GM12878 (cell line): ENCODE measurements at regions of chr3 and their contacts with region 1.

Region 1: GRCh38 chr3:42190701-42191462 is 75.1 kb downstream of the CCK start:
- DNase-seq: no peak
- ATAC-seq: peak; percentile 47
- H3K4me3 ChIP-seq: no peak overlapping the region
- H3K27ac ChIP-seq: peak overlapping the region; percentile 81; the same call in 1 of the 2 replicates
- H3K4me1 ChIP-seq: peaks cover 50% of the 10 kb centered on the region
- H3K27me3 ChIP-seq: no peaks in the 10 kb centered on the region
- CTCF ChIP-seq: peak; percentile 75 to 91 (median 79)
- EP300 ChIP-seq: no peak
- POLR2A ChIP-seq: peak; percentile 21; the same call in 1 of the 2 replicates
- RAD21 ChIP-seq: peak; percentile 79

Region 2: DNA sequence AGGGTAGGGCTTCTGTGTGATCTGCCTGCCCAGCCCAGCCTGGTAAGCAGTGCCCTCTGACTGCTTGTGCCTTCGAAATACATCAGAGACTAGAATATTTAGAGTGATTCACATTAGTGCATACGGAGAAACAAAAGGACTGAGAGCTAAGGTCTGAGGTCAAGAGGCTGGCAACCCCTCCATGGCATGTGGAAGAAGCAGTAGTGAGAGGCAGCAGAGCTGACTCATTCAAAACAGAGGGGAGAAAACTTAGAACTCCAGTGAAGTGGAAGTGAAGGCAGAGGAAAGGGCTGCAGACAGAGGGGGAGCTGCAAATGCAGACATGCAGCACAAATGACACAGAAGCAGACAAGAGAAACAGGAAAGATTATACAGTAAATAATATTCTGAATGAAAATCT is 290.6 kb before region 1 on chr3:
- CTCF ChIA-PET with region 1: interaction called, 19 read pairs
- POLR2A ChIA-PET with region 1: no interaction called
- RAD21 ChIA-PET with region 1: interaction called, 5 read pairs
- SMC1A ChIA-PET with region 1: interaction called, 13 read pairs
- in situ Hi-C with region 1: no loop called
- intact Hi-C with region 1: loop called (anchors 10 kb)
- DNase-seq: no peak
- ATAC-seq: no peak
- H3K4me3 ChIP-seq: no peak overlapping the region
- H3K27ac ChIP-seq: no peak overlapping the region
- H3K4me1 ChIP-seq: no peaks in the 10 kb centered on the region
- H3K27me3 ChIP-seq: no peaks in the 10 kb centered on the region
- CTCF ChIP-seq: no peak
- EP300 ChIP-seq: no peak
- POLR2A ChIP-seq: no peak
- RAD21 ChIP-seq: no peak

Region 3: GRCh38 chr3:42081838-42082473 is 108.9 kb before region 1 on chr3:
- CTCF ChIA-PET with region 1: interaction called, 10 read pairs
- POLR2A ChIA-PET with region 1: no interaction called
- RAD21 ChIA-PET with region 1: interaction called, 3 read pairs
- SMC1A ChIA-PET with region 1: no interaction called
- in situ Hi-C with region 1: no loop called
- intact Hi-C with region 1: no loop called
- DNase-seq: no peak
- ATAC-seq: peak; percentile 68
- H3K4me3 ChIP-seq: peak overlapping the region; percentile 17; the same call in 1 of the 2 replicates
- H3K27ac ChIP-seq: peak overlapping the region; percentile 76
- H3K4me1 ChIP-seq: peaks cover 44% of the 10 kb centered on the region
- H3K27me3 ChIP-seq: no peaks in the 10 kb centered on the region
- CTCF ChIP-seq: no peak
- EP300 ChIP-seq: no peak
- POLR2A ChIP-seq: no peak
- RAD21 ChIP-seq: no peak

Region 4: DNA sequence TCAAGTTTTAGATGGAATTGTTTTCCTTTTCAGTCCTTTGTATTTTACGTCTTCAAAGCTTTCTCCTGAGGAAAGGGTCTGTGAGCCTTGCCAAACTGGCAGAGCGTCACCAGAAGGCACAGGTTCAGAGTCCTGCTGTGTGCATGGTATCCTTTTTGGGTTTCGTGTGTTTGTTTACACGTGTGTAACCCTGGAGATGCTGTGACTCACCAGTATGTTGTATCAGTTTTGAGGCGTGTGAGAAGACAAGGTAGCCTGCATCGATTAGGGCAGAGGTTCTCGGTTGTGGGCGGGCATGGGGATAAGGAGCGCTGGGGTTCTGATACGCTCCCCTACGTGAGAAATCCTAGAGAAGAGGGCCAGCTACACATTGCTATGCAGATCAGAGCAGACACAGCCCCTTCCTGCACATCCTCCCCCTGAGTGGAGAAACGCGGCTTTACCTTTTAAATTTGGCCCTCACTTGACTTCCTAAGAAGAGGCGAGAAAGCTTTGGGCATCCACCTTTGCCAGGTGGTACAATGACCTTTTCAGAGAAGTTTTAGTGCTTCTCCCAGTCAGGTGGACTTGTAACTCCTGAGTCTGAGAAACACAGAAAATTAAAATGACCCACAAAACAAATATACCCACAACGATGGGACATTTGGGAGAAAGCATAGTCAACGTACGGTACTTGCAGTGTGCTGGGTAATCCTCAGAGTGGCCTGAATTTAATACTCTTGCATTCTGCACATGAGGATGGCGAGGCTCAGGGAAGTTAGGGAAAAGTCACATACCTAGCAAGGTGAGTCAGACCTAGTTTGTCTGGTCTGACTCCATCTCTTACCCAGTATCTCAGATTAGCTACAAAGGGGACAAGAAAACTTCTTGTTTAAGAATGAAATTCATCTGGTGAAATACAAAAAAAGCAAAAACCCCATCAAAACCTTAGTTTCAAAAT is 61.6 kb before region 1 on chr3:
- CTCF ChIA-PET with region 1: interaction called, 45 read pairs
- POLR2A ChIA-PET with region 1: interaction called, 6 read pairs
- RAD21 ChIA-PET with region 1: interaction called, 3 read pairs
- SMC1A ChIA-PET with region 1: interaction called, 26 read pairs
- in situ Hi-C with region 1: no loop called
- intact Hi-C with region 1: no loop called
- DNase-seq: no peak
- ATAC-seq: no peak
- H3K4me3 ChIP-seq: no peak overlapping the region
- H3K27ac ChIP-seq: no peak overlapping the region
- H3K4me1 ChIP-seq: peaks cover 10% of the 10 kb centered on the region
- H3K27me3 ChIP-seq: no peaks in the 10 kb centered on the region
- CTCF ChIP-seq: no peak
- EP300 ChIP-seq: no peak
- POLR2A ChIP-seq: no peak
- RAD21 ChIP-seq: no peak

Region 5: DNA sequence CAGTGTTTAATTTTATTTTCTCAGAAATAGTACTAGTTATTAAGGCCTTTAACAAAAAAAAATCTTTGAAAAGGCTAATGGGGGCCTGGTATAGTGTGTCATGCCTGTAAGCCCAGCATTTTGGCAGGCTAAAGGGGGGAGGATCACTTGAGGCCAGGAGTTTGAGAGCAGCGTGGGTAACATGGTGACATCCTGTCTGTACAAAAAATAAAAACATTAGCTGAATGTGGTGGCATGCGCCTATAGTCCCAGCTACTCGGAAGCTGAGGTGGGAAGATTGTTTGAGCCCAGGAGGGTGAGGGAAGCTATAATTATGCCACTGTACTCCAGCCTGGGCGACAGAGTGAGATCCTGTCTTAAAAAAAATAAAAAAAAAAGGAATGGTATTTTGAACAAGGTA is 37.8 kb before region 1 on chr3:
- CTCF ChIA-PET with region 1: interaction called, 11 read pairs
- POLR2A ChIA-PET with region 1: no interaction called
- RAD21 ChIA-PET with region 1: interaction called, 3 read pairs
- SMC1A ChIA-PET with region 1: interaction called, 8 read pairs
- in situ Hi-C with region 1: no loop called
- intact Hi-C with region 1: no loop called
- DNase-seq: no peak
- ATAC-seq: no peak
- H3K4me3 ChIP-seq: no peak overlapping the region
- H3K27ac ChIP-seq: no peak overlapping the region
- H3K4me1 ChIP-seq: peaks cover 5% of the 10 kb centered on the region; the same call in 1 of the 2 replicates
- H3K27me3 ChIP-seq: no peaks in the 10 kb centered on the region
- CTCF ChIP-seq: no peak
- EP300 ChIP-seq: no peak
- POLR2A ChIP-seq: no peak
- RAD21 ChIP-seq: no peak

Region 6: GRCh38 chr3:42179110-42179725 is 11.7 kb before region 1 on chr3:
- CTCF ChIA-PET with region 1: interaction called, 130 read pairs
- POLR2A ChIA-PET with region 1: no interaction called
- RAD21 ChIA-PET with region 1: interaction called, 14 read pairs
- SMC1A ChIA-PET with region 1: interaction called, 21 read pairs
- in situ Hi-C with region 1: no loop called
- intact Hi-C with region 1: no loop called
- DNase-seq: no peak
- ATAC-seq: no peak
- H3K4me3 ChIP-seq: no peak overlapping the region
- H3K27ac ChIP-seq: no peak overlapping the region
- H3K4me1 ChIP-seq: peaks cover 21% of the 10 kb centered on the region
- H3K27me3 ChIP-seq: no peaks in the 10 kb centered on the region
- CTCF ChIP-seq: no peak
- EP300 ChIP-seq: no peak
- POLR2A ChIP-seq: no peak
- RAD21 ChIP-seq: no peak

Region 7: DNA sequence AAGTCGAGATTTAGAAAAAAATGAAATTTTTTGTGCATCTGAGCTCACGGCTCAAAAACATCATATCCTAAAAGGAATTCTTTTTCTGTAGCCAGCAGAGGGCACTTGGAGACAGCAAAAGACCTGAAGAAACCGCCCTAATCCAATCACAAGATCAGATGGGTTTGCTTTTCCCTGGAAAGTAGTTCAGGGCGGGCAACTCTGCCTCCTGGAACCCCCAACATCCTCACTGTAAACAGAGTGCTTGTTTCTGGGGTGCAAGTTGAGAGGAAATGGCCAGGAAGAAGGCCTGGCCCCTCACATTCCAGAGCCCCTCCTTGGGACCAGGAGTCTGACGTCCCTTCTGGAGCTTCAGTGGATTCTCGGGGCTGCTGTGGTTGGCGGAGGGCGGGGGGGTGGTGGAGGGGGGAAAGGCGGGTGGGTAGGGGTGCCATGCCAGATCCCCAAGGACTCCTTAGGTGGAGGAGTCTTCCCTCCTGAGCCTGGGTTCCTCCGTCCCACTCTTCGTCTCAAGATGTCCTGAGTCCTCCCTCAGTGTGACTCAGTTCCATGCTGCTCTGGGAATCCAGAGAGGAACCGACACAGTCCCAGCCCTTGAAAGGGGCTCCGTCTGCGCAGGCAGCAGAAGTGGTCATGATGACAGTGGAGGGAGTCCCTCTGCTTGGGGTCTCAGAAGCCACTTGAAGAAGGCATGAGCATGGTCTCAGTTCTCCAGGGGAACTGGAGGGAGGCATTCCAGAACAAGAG is 39.2 kb after region 1 on chr3:
- CTCF ChIA-PET with region 1: interaction called, 8 read pairs
- POLR2A ChIA-PET with region 1: no interaction called
- RAD21 ChIA-PET with region 1: interaction called, 4 read pairs
- SMC1A ChIA-PET with region 1: interaction called, 3 read pairs
- in situ Hi-C with region 1: no loop called
- intact Hi-C with region 1: loop called (anchors 1 kb)
- DNase-seq: no peak
- ATAC-seq: no peak
- H3K4me3 ChIP-seq: no peak overlapping the region
- H3K27ac ChIP-seq: no peak overlapping the region
- H3K4me1 ChIP-seq: peaks cover 3% of the 10 kb centered on the region; the same call in 1 of the 2 replicates
- H3K27me3 ChIP-seq: no peaks in the 10 kb centered on the region
- CTCF ChIP-seq: peak in 2 of 3 experiments; percentile 19 to 30; a peak in 3 of 6 replicates
- EP300 ChIP-seq: no peak
- POLR2A ChIP-seq: no peak
- RAD21 ChIP-seq: peak; percentile 53